AG04449 (cell line): ENCODE measurements at regions of chr22 and their contacts with region 1.

Region 1: GRCh38 chr22:37561212-37562048 is 1.1 kb downstream of the CDC42EP1 start:
- DNase-seq: no peak
- H3K4me3 ChIP-seq: peak overlapping the region; percentile 82
- CTCF ChIP-seq: peak; percentile 90

Region 2: GRCh38 chr22:37334859-37335805 is 226.3 kb before region 1 on chr22:
- CTCF ChIA-PET with region 1: no interaction called
- POLR2A ChIA-PET with region 1: no interaction called
- DNase-seq: no peak
- H3K4me3 ChIP-seq: no peak overlapping the region
- CTCF ChIP-seq: no peak

Region 3: GRCh38 chr22:37518509-37519267 is 42.7 kb before region 1 on chr22:
- CTCF ChIA-PET with region 1: no interaction called
- POLR2A ChIA-PET with region 1: no interaction called
- DNase-seq: no peak
- H3K4me3 ChIP-seq: peak overlapping the region; percentile 65
- CTCF ChIP-seq: no peak

Region 4: GRCh38 chr22:37544955-37545699 is 16.3 kb before region 1 on chr22:
- CTCF ChIA-PET with region 1: interaction called, 728 read pairs
- POLR2A ChIA-PET with region 1: interaction called, 12 read pairs
- DNase-seq: no peak
- H3K4me3 ChIP-seq: peak overlapping the region; percentile 42
- CTCF ChIP-seq: peak; percentile 87

Region 5: GRCh38 chr22:37575490-37576003 is 14.1 kb after region 1 on chr22:
- CTCF ChIA-PET with region 1: interaction called, 70 read pairs
- POLR2A ChIA-PET with region 1: interaction called, 3 read pairs
- DNase-seq: no peak
- H3K4me3 ChIP-seq: no peak overlapping the region
- CTCF ChIP-seq: no peak

Region 6: DNA sequence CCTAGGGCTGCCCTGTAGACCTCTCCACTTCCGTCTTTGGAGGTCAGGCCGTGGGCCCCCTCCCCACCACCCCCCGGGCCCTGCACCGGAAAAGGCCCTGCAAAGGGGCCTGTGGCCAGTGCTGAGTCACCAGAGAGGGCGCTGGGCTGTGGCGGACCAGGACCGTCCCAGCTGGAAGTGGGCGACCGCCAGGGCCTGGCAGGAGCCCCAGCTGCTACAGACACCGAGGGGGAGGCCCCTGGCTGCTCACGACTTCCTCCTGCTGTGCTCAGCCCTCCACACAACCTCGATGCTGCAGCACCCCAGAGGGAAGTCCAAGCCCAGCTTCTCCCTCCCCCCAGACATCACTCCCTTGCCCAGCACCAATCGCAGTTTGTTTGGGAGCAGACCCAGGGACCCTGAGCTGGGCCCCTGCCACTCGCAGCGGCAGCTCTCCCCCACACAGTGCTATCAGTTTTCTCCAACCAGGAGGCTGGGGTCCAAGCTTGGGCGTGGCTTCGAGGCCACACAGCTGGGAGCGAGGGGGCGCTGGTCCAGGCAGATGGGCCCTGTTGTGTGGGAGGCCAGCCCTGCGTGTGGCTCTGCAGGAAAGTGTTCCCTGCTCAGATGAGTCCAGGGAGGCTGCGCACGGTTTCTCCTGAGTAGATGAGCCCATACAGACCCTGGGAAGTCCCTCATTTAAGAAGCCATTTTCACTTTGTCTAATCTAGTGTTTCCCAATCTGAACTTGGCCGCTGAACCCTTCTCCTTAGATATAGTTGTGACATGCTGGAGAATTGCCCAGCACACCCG is 72.4 kb after region 1 on chr22:
- CTCF ChIA-PET with region 1: no interaction called
- POLR2A ChIA-PET with region 1: no interaction called
- DNase-seq: peak; percentile 42
- H3K4me3 ChIP-seq: no peak overlapping the region; the same call in 1 of the 2 replicates
- CTCF ChIP-seq: peak; percentile 39